H1 (cell line): ENCODE measurements at regions of chr2 and their contacts with region 1.

Region 1: GRCh38 chr2:71157124-71157793 is 26.8 kb downstream of the MPHOSPH10 start:
- DNase-seq: peak; percentile 43 to 96
- H3K4me3 ChIP-seq: no peak overlapping the region
- H3K27ac ChIP-seq: no peak overlapping the region
- H3K4me1 ChIP-seq: peaks cover 0 to 2% (median 0%) of the 10 kb centered on the region in 4 experiments; a peak in 3 of 7 replicates
- H3K27me3 ChIP-seq: no peaks in the 10 kb centered on the region; a peak in 1 of 7 replicates
- CTCF ChIP-seq: peak; percentile 80 to 90 (median 88)
- EP300 ChIP-seq: no peak
- POLR2A ChIP-seq: no peak
- RAD21 ChIP-seq: peak; percentile 94 to 95

Region 2: GRCh38 chr2:71181332-71181731 is 24.1 kb after region 1 on chr2:
- CTCF ChIA-PET with region 1: interaction called, 17 read pairs
- POLR2A ChIA-PET with region 1: no interaction called
- DNase-seq: no peak
- H3K4me3 ChIP-seq: no peak overlapping the region
- H3K27ac ChIP-seq: no peak overlapping the region
- H3K4me1 ChIP-seq: peaks cover 0 to 4% (median 3%) of the 10 kb centered on the region in 4 experiments; a peak in 4 of 7 replicates
- H3K27me3 ChIP-seq: no peaks in the 10 kb centered on the region
- CTCF ChIP-seq: no peak
- EP300 ChIP-seq: no peak
- POLR2A ChIP-seq: no peak
- RAD21 ChIP-seq: no peak

Region 3: GRCh38 chr2:71190656-71191569 is 33.7 kb after region 1 on chr2:
- CTCF ChIA-PET with region 1: interaction called, 25 read pairs
- POLR2A ChIA-PET with region 1: no interaction called
- DNase-seq: no peak
- H3K4me3 ChIP-seq: no peak overlapping the region
- H3K27ac ChIP-seq: no peak overlapping the region
- H3K4me1 ChIP-seq: peaks cover 0 to 11% (median 5%) of the 10 kb centered on the region in 4 experiments; a peak in 3 of 7 replicates
- H3K27me3 ChIP-seq: no peaks in the 10 kb centered on the region
- CTCF ChIP-seq: peak in 2 of 3 experiments; percentile 19 to 42; a peak in 1 of 4 replicates
- EP300 ChIP-seq: no peak
- POLR2A ChIP-seq: no peak
- RAD21 ChIP-seq: peak; percentile 52 to 63

Region 4: DNA sequence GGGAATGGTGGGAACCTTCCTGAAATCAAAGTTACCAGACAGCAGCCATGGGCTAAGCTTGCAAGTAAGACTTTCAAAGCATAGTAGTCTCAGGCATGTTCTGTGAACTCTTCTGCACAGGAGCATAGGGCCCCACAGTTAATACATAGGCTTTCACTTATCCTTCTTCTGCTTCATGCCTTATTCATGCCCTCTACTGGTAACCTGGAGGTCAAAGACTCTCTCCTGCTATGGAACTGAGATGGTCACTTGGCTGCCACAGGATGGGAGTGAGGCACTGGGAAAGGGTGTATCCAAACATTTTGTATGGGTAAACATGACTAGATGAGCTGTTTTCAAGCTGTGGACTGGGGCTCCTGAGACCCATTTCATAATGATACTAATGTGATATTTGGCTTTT is 125.2 kb after region 1 on chr2:
- CTCF ChIA-PET with region 1: interaction called, 21 read pairs
- POLR2A ChIA-PET with region 1: no interaction called
- DNase-seq: no peak
- H3K4me3 ChIP-seq: no peak overlapping the region
- H3K27ac ChIP-seq: no peak overlapping the region
- H3K4me1 ChIP-seq: peaks cover 3 to 14% (median 6%) of the 10 kb centered on the region in 4 experiments; a peak in 6 of 7 replicates
- H3K27me3 ChIP-seq: no peaks in the 10 kb centered on the region
- CTCF ChIP-seq: peak in 2 of 3 experiments; percentile 34 to 37; a peak in 3 of 4 replicates
- EP300 ChIP-seq: no peak
- POLR2A ChIP-seq: no peak
- RAD21 ChIP-seq: peak; percentile 37 to 53; a peak in 3 of 4 replicates